PC-3 (cell line): ENCODE measurements at regions of chr1 and their contacts with region 1.

Region 1: GRCh38 chr1:221741711-221742554 is at the start of gene DUSP10:
- DNase-seq: peak; percentile 100
- ATAC-seq: peak; percentile 82
- H3K4me3 ChIP-seq: peak within 1 kb of the TSS; percentile 89
- H3K27ac ChIP-seq: peak within 1 kb of the TSS; percentile 85
- H3K4me1 ChIP-seq: peaks cover 15% of the 10 kb centered on the region
- H3K27me3 ChIP-seq: no peaks in the 10 kb centered on the region
- CTCF ChIP-seq: no peak
- total RNA-seq, gene DUSP10: 5.1 and 6.2 TPM in 2 replicates

Region 2: GRCh38 chr1:221514806-221515205 is 227.1 kb before region 1 on chr1:
- CTCF ChIA-PET with region 1: no interaction called
- POLR2A ChIA-PET with region 1: no interaction called
- intact Hi-C with region 1: loop called (anchors 1 kb)
- DNase-seq: no peak
- ATAC-seq: peak; percentile 11; the same call in 1 of the 2 replicates
- H3K4me3 ChIP-seq: no peak overlapping the region
- H3K27ac ChIP-seq: no peak overlapping the region
- H3K4me1 ChIP-seq: no peaks in the 10 kb centered on the region
- H3K27me3 ChIP-seq: no peaks in the 10 kb centered on the region
- CTCF ChIP-seq: no peak

Region 3: DNA sequence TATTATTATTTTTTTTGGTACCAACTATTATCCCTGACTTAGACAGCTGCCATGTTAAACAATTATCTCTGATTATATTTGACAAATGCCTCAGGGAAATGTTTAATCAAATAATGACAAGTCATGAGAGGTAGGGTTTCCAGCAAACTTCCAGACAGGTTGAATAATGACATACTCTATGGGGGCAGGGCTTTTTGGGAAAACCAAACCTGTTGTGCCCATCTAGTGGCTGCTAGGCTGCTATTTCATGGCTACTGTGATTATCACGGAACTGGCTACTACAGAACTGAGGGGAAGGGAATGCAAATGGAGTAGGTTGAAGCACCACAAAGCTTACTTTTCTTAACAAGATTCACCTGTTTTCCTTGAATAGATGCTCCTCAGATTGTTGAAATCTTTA is 77.7 kb before region 1 on chr1:
- CTCF ChIA-PET with region 1: no interaction called
- POLR2A ChIA-PET with region 1: no interaction called
- intact Hi-C with region 1: loop called (anchors 5 kb)
- DNase-seq: peak; percentile 63
- ATAC-seq: peak; percentile 55
- H3K4me3 ChIP-seq: no peak overlapping the region
- H3K27ac ChIP-seq: no peak overlapping the region
- H3K4me1 ChIP-seq: peaks cover 11% of the 10 kb centered on the region
- H3K27me3 ChIP-seq: no peaks in the 10 kb centered on the region
- CTCF ChIP-seq: no peak; the same call in 1 of the 2 replicates

Region 4: GRCh38 chr1:221868593-221869303 is 126.8 kb after region 1 on chr1:
- CTCF ChIA-PET with region 1: interaction called, 4 read pairs
- POLR2A ChIA-PET with region 1: interaction called, 3 read pairs
- intact Hi-C with region 1: loop called (anchors 1 kb)
- DNase-seq: peak; percentile 93
- ATAC-seq: peak; percentile 93
- H3K4me3 ChIP-seq: peak overlapping the region; percentile 19; the same call in 1 of the 2 replicates
- H3K27ac ChIP-seq: peak overlapping the region; percentile 61
- H3K4me1 ChIP-seq: peaks cover 23% of the 10 kb centered on the region
- H3K27me3 ChIP-seq: no peaks in the 10 kb centered on the region
- CTCF ChIP-seq: no peak

Region 5: GRCh38 chr1:222009105-222009730 is 267.3 kb after region 1 on chr1:
- CTCF ChIA-PET with region 1: interaction called, 5 read pairs
- POLR2A ChIA-PET with region 1: no interaction called
- intact Hi-C with region 1: loop called (anchors 1 kb)
- DNase-seq: peak; percentile 78
- ATAC-seq: peak; percentile 88
- H3K4me3 ChIP-seq: no peak overlapping the region
- H3K27ac ChIP-seq: no peak overlapping the region
- H3K4me1 ChIP-seq: peaks cover 12% of the 10 kb centered on the region; the same call in 1 of the 2 replicates
- H3K27me3 ChIP-seq: no peaks in the 10 kb centered on the region
- CTCF ChIP-seq: peak; percentile 94

Region 6: DNA sequence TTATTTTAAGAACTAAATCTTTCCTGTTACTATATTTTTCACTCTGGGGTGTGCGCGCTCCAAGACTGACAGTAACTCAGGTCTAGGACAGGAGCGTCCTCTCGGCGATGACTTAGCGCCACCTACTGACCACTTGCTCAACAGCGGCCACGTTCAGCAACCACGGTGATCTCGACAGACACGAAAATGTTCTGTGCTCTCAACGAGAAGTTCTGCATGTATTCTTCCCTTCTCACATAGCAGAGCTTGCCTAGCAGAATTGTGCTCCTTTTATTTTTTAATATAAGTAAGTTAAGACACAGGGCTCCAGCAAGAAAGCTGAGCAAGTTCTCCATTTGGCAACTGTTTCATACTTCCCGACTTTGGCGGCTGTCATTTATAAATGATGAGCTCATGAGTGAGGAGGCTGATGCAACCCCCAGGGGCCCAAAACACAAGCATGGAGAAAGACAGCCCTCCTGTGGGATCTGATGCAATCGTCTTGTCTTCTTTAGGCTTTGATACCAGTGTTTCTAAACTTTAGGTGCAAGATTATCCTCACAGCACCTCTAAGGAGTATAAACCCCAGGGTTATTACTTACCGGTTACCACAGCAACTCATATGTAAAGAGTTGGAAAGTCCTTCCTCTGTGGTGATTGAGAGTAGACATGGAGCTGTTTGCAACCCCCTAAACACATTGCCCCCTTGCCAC is 713.4 kb after region 1 on chr1:
- CTCF ChIA-PET with region 1: interaction called, 10 read pairs
- POLR2A ChIA-PET with region 1: no interaction called
- intact Hi-C with region 1: loop called (anchors 1 kb)
- DNase-seq: peak; percentile 98
- ATAC-seq: peak; percentile 99
- H3K4me3 ChIP-seq: peak overlapping the region; percentile 57
- H3K27ac ChIP-seq: no peak overlapping the region
- H3K4me1 ChIP-seq: peaks cover 7% of the 10 kb centered on the region; the same call in 1 of the 2 replicates
- H3K27me3 ChIP-seq: no peaks in the 10 kb centered on the region
- CTCF ChIP-seq: peak; percentile 99